Motor neuron (in vitro differentiated cells): ENCODE measurements at regions of chr3 and their contacts with region 1.

Region 1: GRCh38 chr3:24963762-24964625 is 464.1 kb upstream of the RARB start:
- ATAC-seq: peak in 4 of 8 experiments; percentile 22 to 48 (median 33)
- H3K4me3 ChIP-seq: no peak overlapping the region
- H3K27ac ChIP-seq: no peak overlapping the region
- H3K4me1 ChIP-seq: peaks cover 7 to 21% of the 10 kb centered on the region in 2 donors

Region 2: DNA sequence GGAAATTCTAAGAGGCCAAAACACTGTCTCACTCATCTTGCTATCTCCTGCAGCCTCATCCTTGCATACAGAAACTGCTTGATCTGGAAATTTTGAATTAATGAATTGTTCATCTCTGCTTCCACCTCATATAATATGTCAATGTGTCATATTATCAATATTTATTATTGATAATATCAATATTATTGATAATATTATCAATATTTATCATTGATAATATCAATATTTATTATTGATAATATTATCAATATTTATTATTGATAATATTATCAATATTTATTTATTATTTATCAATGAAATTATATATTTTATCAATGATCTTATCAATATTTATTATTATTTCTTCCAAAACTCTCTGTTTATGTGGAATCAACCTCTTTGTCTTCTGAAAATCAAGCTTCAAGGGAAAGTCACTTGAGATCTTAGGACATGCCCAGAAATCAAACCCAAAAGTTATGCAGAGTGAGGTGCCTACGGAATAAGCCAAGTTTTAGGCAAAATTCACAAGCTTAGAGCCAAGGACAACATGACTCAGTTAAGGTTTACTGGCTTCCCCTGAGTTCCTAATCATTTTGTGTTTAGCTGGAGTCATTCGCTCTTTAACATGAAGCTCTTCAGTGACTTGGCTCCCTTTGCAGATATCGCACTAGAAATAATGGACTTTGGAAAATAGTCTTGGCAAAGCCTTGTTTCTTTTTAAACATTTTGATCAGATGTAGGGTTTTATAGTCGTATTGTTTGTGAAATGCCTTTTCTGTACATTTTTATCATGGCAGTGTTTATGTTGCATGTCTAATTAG is 166.9 kb after region 1 on chr3:
- in situ Hi-C with region 1: no loop called
- ATAC-seq: no peak
- H3K4me3 ChIP-seq: no peak overlapping the region
- H3K27ac ChIP-seq: no peak overlapping the region
- H3K4me1 ChIP-seq: no peaks in the 10 kb centered on the region

Region 3: DNA sequence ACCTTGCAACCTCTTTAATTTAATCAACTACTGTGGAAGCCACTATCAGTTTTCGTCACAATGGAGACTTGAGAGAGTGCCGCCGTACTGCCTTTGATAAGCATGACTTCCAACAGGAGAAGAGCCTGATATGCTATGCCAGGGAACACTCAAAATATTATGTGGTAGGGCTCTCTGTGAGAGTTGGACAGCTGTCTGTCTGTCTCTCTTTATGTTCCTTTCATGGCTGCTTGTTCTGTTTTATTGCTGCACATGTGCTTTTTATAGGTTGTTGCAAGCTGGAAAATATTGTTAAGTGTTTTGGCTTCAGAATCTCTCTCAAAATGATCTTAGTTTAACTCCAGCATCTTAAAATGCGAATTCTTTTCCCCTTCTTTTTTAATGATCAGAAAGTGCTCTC is 214.7 kb after region 1 on chr3:
- in situ Hi-C with region 1: no loop called
- ATAC-seq: no peak
- H3K4me3 ChIP-seq: no peak overlapping the region
- H3K27ac ChIP-seq: no peak overlapping the region
- H3K4me1 ChIP-seq: no peaks in the 10 kb centered on the region

Region 4: DNA sequence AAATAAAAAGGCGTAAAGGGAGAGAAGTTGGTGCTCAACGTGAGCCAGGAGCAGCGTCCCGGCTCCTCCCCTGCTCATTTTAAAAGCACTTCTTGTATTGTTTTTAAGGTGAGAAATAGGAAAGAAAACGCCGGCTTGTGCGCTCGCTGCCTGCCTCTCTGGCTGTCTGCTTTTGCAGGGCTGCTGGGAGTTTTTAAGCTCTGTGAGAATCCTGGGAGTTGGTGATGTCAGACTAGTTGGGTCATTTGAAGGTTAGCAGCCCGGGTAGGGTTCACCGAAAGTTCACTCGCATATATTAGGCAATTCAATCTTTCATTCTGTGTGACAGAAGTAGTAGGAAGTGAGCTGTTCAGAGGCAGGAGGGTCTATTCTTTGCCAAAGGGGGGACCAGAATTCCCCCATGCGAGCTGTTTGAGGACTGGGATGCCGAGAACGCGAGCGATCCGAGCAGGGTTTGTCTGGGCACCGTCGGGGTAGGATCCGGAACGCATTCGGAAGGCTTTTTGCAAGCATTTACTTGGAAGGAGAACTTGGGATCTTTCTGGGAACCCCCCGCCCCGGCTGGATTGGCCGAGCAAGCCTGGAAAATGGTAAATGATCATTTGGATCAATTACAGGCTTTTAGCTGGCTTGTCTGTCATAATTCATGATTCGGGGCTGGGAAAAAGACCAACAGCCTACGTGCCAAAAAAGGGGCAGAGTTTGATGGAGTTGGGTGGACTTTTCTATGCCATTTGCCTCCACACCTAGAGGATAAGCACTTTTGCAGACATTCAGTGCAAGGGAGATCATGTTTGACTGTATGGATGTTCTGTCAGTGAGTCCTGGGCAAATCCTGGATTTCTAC is 464.2 kb after region 1 on chr3 and contains the start of gene RARB:
- in situ Hi-C with region 1: loop called in 1 of 9 experiments (anchors 25 kb)
- ATAC-seq: peak; percentile 83 to 91 (median 90)
- H3K4me3 ChIP-seq: peak within 1 kb of the TSS; percentile 55 to 72 (median 65)
- H3K27ac ChIP-seq: peak within 1 kb of the TSS; percentile 98 to 99
- H3K4me1 ChIP-seq: peaks cover 19 to 38% of the 10 kb centered on the region in 2 donors
- total RNA-seq, gene RARB: 16.9 to 72.4 (median 31.3) TPM